ENCODE measurements at regions of chr19 and their contacts with region 1.

Region 1: DNA sequence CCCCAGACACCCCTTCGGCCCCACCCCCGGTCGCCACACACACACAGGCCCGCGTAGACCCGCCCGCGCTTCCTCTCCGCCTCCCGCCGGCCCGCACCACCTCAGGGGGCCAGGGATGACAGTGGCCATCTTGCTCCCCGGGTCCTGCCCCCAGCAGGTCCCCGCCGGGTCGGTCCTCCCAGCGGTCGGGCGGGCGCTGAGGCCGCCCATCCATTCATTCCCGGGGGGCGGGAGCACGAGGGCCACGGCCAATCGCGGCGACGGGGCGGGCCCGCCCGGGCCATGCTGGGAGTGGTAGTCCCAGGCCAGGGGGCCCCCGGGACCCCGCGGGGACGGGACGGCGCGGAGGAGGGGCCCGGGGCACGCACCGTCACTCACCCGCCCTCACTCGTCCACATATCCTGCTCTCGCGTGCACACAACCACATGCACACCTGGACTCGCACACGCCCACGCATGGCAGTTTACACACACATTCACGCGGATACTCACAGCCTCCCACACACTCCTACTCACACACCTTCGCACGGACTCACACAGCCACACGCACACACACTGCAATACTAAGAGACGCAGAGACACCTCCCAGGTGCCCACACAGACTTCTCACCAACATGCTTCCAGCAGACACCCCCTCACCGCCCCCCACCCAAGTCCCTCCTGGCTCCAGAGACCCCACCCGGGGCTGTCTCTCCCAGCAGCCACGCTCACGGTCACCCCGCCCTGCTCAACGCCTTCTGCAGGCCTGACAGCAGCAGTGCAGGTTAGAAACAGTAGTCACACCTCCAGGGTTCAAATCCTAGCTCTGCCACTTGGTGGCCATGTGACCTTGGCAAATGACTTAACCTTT is at the start of gene DPF1:
- DNase-seq: no peak
- ATAC-seq: peak; percentile 92
- H3K4me3 ChIP-seq: peak within 1 kb of the TSS; percentile 53 to 81
- H3K27ac ChIP-seq: no peak within 1 kb of the TSS
- H3K4me1 ChIP-seq: peaks cover 13% of the 10 kb centered on the region
- H3K27me3 ChIP-seq: no peaks in the 10 kb centered on the region
- CTCF ChIP-seq: no peak
- total RNA-seq, gene DPF1: 7.5 TPM

Region 2: GRCh38 chr19:38142176-38143035 is 81.8 kb before region 1 on chr19:
- CTCF ChIA-PET with region 1: interaction called, 10 read pairs
- POLR2A ChIA-PET with region 1: interaction called, 4 read pairs
- in situ Hi-C with region 1: no loop called
- intact Hi-C with region 1: no loop called
- DNase-seq: peak; percentile 5
- ATAC-seq: peak; percentile 90
- H3K4me3 ChIP-seq: no peak overlapping the region
- H3K27ac ChIP-seq: no peak overlapping the region
- H3K4me1 ChIP-seq: no peaks in the 10 kb centered on the region
- H3K27me3 ChIP-seq: no peaks in the 10 kb centered on the region
- CTCF ChIP-seq: peak; percentile 97

Region 3: GRCh38 chr19:38496603-38497487 is 272.6 kb after region 1 on chr19:
- CTCF ChIA-PET with region 1: interaction called, 10 read pairs
- POLR2A ChIA-PET with region 1: interaction called, 17 read pairs
- in situ Hi-C with region 1: no loop called
- intact Hi-C with region 1: no loop called
- DNase-seq: no peak
- ATAC-seq: no peak
- H3K4me3 ChIP-seq: no peak overlapping the region
- H3K27ac ChIP-seq: no peak overlapping the region
- H3K4me1 ChIP-seq: no peaks in the 10 kb centered on the region
- H3K27me3 ChIP-seq: no peaks in the 10 kb centered on the region
- CTCF ChIP-seq: no peak

Measured in Panc1 (cell line).